CD4-positive, alpha-beta T cell (primary cell): ENCODE measurements at regions of chr18 and their contacts with region 1.

Region 1: DNA sequence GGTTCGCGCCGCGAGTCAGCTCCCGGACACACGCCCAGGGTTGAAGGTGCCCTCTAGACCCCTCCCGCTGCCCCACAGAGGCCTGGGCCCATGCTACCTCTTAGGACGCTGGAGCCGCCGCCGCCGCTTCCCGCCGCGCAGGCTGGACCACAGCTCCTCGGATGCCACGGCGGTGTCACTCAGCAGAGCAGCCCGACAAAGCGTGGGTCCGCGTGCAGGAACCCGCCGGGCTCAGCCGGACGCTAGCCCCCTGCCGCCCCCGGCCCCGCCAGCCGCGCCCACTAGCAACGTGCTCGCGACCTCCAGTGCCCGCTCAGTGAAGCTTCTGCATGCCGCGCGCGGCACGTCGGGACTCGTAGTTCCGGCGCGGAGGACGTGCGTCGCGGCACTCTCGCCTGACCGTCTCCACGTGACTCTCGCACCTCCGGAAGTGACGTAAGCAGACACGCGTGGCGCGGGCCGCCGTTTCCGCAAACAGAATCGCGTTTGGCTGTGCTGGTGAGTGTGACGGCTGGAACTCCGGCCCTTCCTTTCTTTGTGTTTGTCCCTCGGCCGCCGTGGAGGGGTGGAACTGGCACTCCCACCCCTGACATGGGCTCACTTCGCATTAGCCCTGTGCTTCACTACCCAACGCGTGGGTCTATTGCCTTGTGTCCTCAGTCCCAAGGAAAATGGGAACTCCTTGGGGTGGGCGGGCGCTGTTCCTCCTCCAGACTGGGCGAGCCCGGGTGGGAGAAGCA is at the starts of genes FAM210A and RNMT:
- DNase-seq: peak; percentile 85 to 98 (median 92)
- ATAC-seq: peak; percentile 92
- H3K4me3 ChIP-seq: peak within 1 kb of the TSS; percentile 89
- H3K4me3 Mint-ChIP-seq: peak within 1 kb of the TSS; percentile 89
- H3K27ac ChIP-seq: peak within 1 kb of the TSS; percentile 86 to 91
- H3K27ac Mint-ChIP-seq: peak within 1 kb of the TSS; percentile 84
- H3K4me1 ChIP-seq: peaks cover 33% of the 10 kb centered on the region
- H3K4me1 Mint-ChIP-seq: peaks cover 74% of the 10 kb centered on the region
- H3K27me3 ChIP-seq: no peaks in the 10 kb centered on the region
- H3K27me3 Mint-ChIP-seq: no peaks in the 10 kb centered on the region
- CTCF ChIP-seq: no peak
- total RNA-seq, gene FAM210A: 3.4 to 3.5 TPM
- total RNA-seq, gene RNMT: 128 to 130 TPM

Region 2: GRCh38 chr18:11851146-11851805 is 1875.1 kb before region 1 on chr18 and contains the start of gene CHMP1B:
- CTCF ChIA-PET with region 1: no interaction called
- POLR2A ChIA-PET with region 1: interaction called, 6 read pairs
- intact Hi-C with region 1: loop called in 1 of 2 experiments (anchors 10 kb)
- DNase-seq: peak; percentile 95 to 99 (median 97)
- ATAC-seq: peak; percentile 74
- H3K4me3 ChIP-seq: peak within 1 kb of the TSS; percentile 64
- H3K4me3 Mint-ChIP-seq: peak within 1 kb of the TSS; percentile 100
- H3K27ac ChIP-seq: peak within 1 kb of the TSS; percentile 85 to 92
- H3K27ac Mint-ChIP-seq: peak within 1 kb of the TSS; percentile 97
- H3K4me1 ChIP-seq: peaks cover 27% of the 10 kb centered on the region
- H3K4me1 Mint-ChIP-seq: peaks cover 53% of the 10 kb centered on the region
- H3K27me3 ChIP-seq: no peaks in the 10 kb centered on the region
- H3K27me3 Mint-ChIP-seq: no peaks in the 10 kb centered on the region
- CTCF ChIP-seq: no peak
- total RNA-seq, gene CHMP1B: 64.4 to 67.4 TPM

Region 3: GRCh38 chr18:12883684-12884405 is 842.6 kb before region 1 on chr18 and contains the start of gene PTPN2:
- CTCF ChIA-PET with region 1: no interaction called
- POLR2A ChIA-PET with region 1: interaction called, 3 read pairs
- intact Hi-C with region 1: loop called in 1 of 2 experiments (anchors 10 kb)
- DNase-seq: peak; percentile 83 to 98 (median 90)
- ATAC-seq: peak; percentile 87
- H3K4me3 ChIP-seq: peak within 1 kb of the TSS; percentile 77
- H3K4me3 Mint-ChIP-seq: peak within 1 kb of the TSS; percentile 97
- H3K27ac ChIP-seq: peak within 1 kb of the TSS; percentile 99
- H3K27ac Mint-ChIP-seq: peak within 1 kb of the TSS; percentile 99
- H3K4me1 ChIP-seq: peaks cover 44% of the 10 kb centered on the region
- H3K4me1 Mint-ChIP-seq: peaks cover 64% of the 10 kb centered on the region
- H3K27me3 ChIP-seq: no peaks in the 10 kb centered on the region
- H3K27me3 Mint-ChIP-seq: no peaks in the 10 kb centered on the region
- CTCF ChIP-seq: no peak
- total RNA-seq, gene PTPN2: 49.4 to 53.8 TPM

Region 4: GRCh38 chr18:12990967-12991838 is 735.2 kb before region 1 on chr18 and contains the start of gene CEP192:
- CTCF ChIA-PET with region 1: no interaction called
- POLR2A ChIA-PET with region 1: no interaction called
- intact Hi-C with region 1: loop called in 1 of 2 experiments (anchors 5 kb)
- DNase-seq: peak; percentile 94 to 99 (median 95)
- ATAC-seq: peak; percentile 97
- H3K4me3 ChIP-seq: peak within 1 kb of the TSS; percentile 85
- H3K4me3 Mint-ChIP-seq: no peak within 1 kb of the TSS
- H3K27ac ChIP-seq: peak within 1 kb of the TSS; percentile 61 to 84
- H3K27ac Mint-ChIP-seq: peak within 1 kb of the TSS; percentile 83
- H3K4me1 ChIP-seq: peaks cover 32% of the 10 kb centered on the region
- H3K4me1 Mint-ChIP-seq: peaks cover 21% of the 10 kb centered on the region
- H3K27me3 ChIP-seq: no peaks in the 10 kb centered on the region
- H3K27me3 Mint-ChIP-seq: no peaks in the 10 kb centered on the region
- CTCF ChIP-seq: no peak
- total RNA-seq, gene CEP192: 23.4 to 25.0 TPM

Region 5: DNA sequence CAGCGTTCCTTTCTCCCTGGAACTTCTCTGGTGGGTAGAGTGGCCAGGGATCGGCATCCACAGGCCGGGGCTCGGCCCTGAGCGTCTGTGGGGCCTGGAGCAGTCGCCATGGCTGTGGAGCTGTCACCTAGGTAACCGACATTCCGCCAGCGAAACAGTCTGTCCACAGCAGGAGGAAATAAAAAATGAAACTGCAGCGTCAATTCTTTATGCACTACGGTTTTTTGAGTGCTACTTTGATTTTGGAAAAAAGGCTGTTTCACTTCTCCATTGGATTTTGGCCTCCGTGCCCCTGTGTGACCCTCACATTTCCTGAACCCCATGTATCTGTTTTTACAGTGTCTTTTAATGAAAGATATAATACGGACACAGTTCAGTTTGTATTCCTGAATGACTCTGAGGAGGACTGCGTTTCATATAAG is 344.4 kb before region 1 on chr18:
- CTCF ChIA-PET with region 1: no interaction called
- POLR2A ChIA-PET with region 1: no interaction called
- intact Hi-C with region 1: loop called in 1 of 2 experiments (anchors 5 kb)
- DNase-seq: peak in 8 of 14 experiments; percentile 34 to 84 (median 52)
- ATAC-seq: peak; percentile 41
- H3K4me3 ChIP-seq: peak overlapping the region; percentile 57
- H3K4me3 Mint-ChIP-seq: peak overlapping the region; percentile 95
- H3K27ac ChIP-seq: peak overlapping the region; percentile 91 to 94
- H3K27ac Mint-ChIP-seq: peak overlapping the region; percentile 98
- H3K4me1 ChIP-seq: peaks cover 64% of the 10 kb centered on the region
- H3K4me1 Mint-ChIP-seq: peaks cover 80% of the 10 kb centered on the region
- H3K27me3 ChIP-seq: no peaks in the 10 kb centered on the region
- H3K27me3 Mint-ChIP-seq: no peaks in the 10 kb centered on the region
- CTCF ChIP-seq: no peak